ENCODE measurements at regions of chr5 and their contacts with region 1.

Region 1: DNA sequence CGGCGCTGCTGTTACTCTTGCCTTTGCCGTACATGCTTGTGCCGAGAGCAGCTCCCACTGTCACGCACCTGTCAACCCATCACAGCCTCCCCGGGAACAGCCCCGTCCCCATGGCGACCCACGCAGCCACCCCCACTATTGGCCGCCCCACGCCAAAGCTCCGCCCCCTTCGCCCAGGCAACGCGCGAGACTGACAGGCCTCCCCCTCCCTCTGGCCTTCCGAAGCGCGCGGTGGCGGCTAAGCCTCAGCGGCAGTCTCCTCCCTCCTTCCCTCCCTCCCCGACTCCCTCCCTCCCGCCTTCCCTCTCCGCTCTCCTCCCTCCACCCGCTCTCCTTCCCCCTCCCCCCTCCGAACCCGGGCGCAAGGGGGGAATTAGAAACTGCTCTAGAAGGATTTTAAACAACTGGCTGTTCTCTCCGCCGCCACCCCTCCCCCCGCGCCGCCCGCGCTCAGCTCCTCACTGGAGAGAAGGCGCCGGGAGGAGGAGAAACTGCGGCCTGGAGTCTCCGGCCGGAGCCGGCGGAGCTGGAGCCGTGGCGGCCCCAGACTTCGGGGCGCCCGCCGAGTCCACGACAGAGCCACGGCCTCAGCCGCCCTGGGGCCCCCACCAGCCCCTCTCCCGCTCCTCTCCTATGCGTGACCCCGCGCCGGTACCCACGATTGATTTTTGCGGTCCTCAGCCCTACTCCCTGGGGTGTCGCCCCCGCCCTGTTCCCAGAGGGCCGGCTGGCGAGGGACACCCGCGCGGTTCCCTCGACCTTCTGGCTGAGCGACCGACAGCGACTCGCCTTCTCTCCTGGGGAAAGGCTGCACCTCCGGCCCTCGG is at the start of gene SSBP2:
- DNase-seq: peak; percentile 91
- ATAC-seq: peak; percentile 93
- H3K4me3 ChIP-seq: peak within 1 kb of the TSS; percentile 47 to 65
- H3K27ac ChIP-seq: peak within 1 kb of the TSS; percentile 93
- H3K4me1 ChIP-seq: peaks cover 23% of the 10 kb centered on the region
- H3K27me3 ChIP-seq: no peaks in the 10 kb centered on the region
- CTCF ChIP-seq: no peak
- total RNA-seq, gene SSBP2: 16.3 TPM

Region 2: GRCh38 chr5:81425569-81425968 is 325.7 kb before region 1 on chr5:
- CTCF ChIA-PET with region 1: no interaction called
- POLR2A ChIA-PET with region 1: no interaction called
- in situ Hi-C with region 1: no loop called
- intact Hi-C with region 1: loop called (anchors 5 kb)
- DNase-seq: no peak
- ATAC-seq: no peak
- H3K4me3 ChIP-seq: no peak overlapping the region
- H3K27ac ChIP-seq: no peak overlapping the region
- H3K4me1 ChIP-seq: peaks cover 27% of the 10 kb centered on the region
- H3K27me3 ChIP-seq: no peaks in the 10 kb centered on the region
- CTCF ChIP-seq: peak; percentile 61; the same call in 1 of the 2 replicates

Region 3: DNA sequence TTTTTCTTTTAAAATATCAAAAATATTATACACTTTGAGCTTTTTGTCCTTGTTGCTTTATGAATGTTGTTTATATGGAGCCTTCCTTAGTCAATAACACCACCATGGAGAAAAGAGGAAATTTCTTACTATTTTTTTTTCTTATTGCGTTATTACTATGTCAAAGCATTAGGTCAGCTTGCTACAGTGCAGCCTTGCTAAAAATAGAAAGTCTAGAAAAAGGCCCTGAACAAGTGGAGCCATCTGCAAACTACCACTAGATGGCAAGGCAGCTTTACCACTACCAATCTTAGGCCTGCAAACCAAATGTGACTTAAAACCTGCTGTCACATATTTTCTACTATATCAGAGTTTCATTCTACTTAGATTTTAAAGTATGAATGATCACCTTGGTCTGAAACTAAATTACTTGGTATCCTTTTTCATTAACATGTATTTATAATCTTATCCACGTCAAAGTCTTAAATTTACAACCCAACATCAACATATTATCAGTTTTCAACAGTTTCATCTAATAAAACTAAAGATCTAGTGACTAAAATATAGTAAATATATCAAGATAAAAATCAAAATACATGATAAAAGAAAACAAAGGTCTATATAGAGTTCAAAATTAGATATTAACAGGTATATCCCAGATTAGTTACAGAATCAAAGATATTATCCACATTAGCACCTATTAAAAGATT is 244.2 kb before region 1 on chr5:
- CTCF ChIA-PET with region 1: no interaction called
- POLR2A ChIA-PET with region 1: no interaction called
- in situ Hi-C with region 1: no loop called
- intact Hi-C with region 1: loop called (anchors 5 kb)
- DNase-seq: peak; percentile 85
- ATAC-seq: peak; percentile 99
- H3K4me3 ChIP-seq: no peak overlapping the region
- H3K27ac ChIP-seq: no peak overlapping the region
- H3K4me1 ChIP-seq: no peaks in the 10 kb centered on the region
- H3K27me3 ChIP-seq: no peaks in the 10 kb centered on the region
- CTCF ChIP-seq: peak; percentile 85

Region 4: GRCh38 chr5:81851481-81852178 is 100.4 kb after region 1 on chr5:
- CTCF ChIA-PET with region 1: interaction called, 11 read pairs
- POLR2A ChIA-PET with region 1: interaction called, 3 read pairs
- in situ Hi-C with region 1: no loop called
- intact Hi-C with region 1: loop called (anchors 2 kb)
- DNase-seq: no peak
- ATAC-seq: peak; percentile 92
- H3K4me3 ChIP-seq: peak overlapping the region; percentile 34 to 55
- H3K27ac ChIP-seq: peak overlapping the region; percentile 89
- H3K4me1 ChIP-seq: peaks cover 28% of the 10 kb centered on the region
- H3K27me3 ChIP-seq: no peaks in the 10 kb centered on the region
- CTCF ChIP-seq: no peak

Region 5: GRCh38 chr5:81965524-81965923 is 214.3 kb after region 1 on chr5:
- CTCF ChIA-PET with region 1: no interaction called
- POLR2A ChIA-PET with region 1: interaction called, 3 read pairs
- in situ Hi-C with region 1: no loop called
- intact Hi-C with region 1: loop called (anchors 10 kb)
- DNase-seq: no peak
- ATAC-seq: no peak
- H3K4me3 ChIP-seq: no peak overlapping the region
- H3K27ac ChIP-seq: no peak overlapping the region
- H3K4me1 ChIP-seq: no peaks in the 10 kb centered on the region; the same call in 1 of the 2 replicates
- H3K27me3 ChIP-seq: no peaks in the 10 kb centered on the region
- CTCF ChIP-seq: no peak

Region 6: GRCh38 chr5:82165740-82166530 is 414.7 kb after region 1 on chr5:
- CTCF ChIA-PET with region 1: no interaction called
- POLR2A ChIA-PET with region 1: interaction called, 4 read pairs
- in situ Hi-C with region 1: no loop called
- intact Hi-C with region 1: loop called (anchors 10 kb)
- DNase-seq: no peak
- ATAC-seq: peak; percentile 95
- H3K4me3 ChIP-seq: no peak overlapping the region
- H3K27ac ChIP-seq: no peak overlapping the region
- H3K4me1 ChIP-seq: peaks cover 4% of the 10 kb centered on the region; the same call in 1 of the 2 replicates
- H3K27me3 ChIP-seq: no peaks in the 10 kb centered on the region
- CTCF ChIP-seq: peak; percentile 79

Region 7: GRCh38 chr5:82225525-82226172 is 474.4 kb after region 1 on chr5:
- CTCF ChIA-PET with region 1: no interaction called
- POLR2A ChIA-PET with region 1: no interaction called
- in situ Hi-C with region 1: no loop called
- intact Hi-C with region 1: loop called (anchors 10 kb)
- DNase-seq: peak; percentile 63
- ATAC-seq: peak; percentile 93
- H3K4me3 ChIP-seq: no peak overlapping the region
- H3K27ac ChIP-seq: no peak overlapping the region
- H3K4me1 ChIP-seq: no peaks in the 10 kb centered on the region; the same call in 1 of the 2 replicates
- H3K27me3 ChIP-seq: no peaks in the 10 kb centered on the region
- CTCF ChIP-seq: peak; percentile 92